ENCODE measurements at regions of chr2 and their contacts with region 1.

Region 1: DNA sequence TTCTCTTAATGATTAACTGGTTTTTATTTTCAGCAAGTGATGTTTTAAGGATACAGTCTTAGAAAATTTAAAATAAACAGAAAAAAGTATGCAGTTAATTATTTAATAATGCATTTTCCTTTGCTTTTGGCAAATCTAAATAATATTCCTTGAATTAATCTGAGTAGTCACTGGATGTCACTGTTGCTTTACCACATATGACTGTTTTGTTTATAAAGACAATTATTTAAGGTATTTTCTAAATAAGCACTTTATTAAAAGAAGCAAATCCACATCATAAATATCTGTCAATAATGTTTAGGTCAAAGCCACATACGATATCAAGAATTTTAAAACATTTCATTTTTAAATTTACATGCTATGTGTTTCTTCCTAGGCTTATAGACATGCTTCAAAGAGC is 40.6 kb upstream of the TFPI start:
- DNase-seq: peak in 1 of 2 donors; percentile 23
- H3K4me3 ChIP-seq: no peak overlapping the region
- H3K27ac ChIP-seq: no peak overlapping the region
- H3K4me1 ChIP-seq: no peaks in the 10 kb centered on the region
- H3K27me3 ChIP-seq: no peaks in the 10 kb centered on the region
- CTCF ChIP-seq: no peak
- EP300 ChIP-seq: no peak
- POLR2A ChIP-seq: no peak

Region 2: DNA sequence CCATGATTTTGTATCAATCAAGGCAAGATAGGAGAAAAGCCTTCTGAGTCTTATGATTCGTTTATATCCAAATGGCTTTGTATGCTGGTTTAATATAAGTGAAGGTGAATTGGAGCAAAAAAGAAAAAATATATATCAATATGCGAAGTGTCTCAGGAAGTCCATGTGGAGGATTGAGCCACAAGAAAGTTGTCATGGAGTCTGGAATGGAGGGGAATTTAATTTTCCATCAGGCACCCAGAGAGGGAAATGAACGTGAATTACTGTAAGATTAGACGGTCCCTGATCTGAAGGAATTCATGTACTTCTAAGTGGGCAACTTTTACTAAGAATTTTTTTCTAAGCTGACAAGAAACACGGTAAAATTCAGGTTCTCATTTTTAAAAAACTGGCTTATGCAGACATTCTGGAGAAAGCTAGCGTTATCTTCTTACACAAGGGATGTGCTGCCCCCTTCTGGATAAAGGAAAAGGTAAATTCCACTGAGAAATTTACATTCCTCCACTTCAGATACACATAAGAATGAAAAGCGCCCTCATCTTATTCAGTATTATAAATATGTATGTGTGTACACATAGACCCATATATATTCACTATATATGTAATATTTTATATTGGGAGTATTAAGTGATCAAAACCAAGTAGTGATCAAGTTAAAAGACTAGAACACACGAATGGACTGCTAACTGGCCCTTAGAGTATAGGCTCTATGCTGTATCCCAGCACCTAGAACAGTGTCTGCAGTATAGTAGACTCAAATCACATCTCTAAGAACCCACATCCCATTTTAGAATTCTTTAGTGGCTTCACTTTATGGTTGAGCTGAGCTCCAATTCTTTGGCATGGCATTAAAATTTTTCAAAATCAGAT is 248.4 kb after region 1 on chr2:
- intact Hi-C with region 1: loop called (anchors 10 kb)
- DNase-seq: peak in 1 of 2 donors; percentile 80
- H3K4me3 ChIP-seq: no peak overlapping the region
- H3K27ac ChIP-seq: no peak overlapping the region
- H3K4me1 ChIP-seq: peaks cover 0 to 6% (median 3%) of the 10 kb centered on the region in 4 donors
- H3K27me3 ChIP-seq: no peaks in the 10 kb centered on the region
- CTCF ChIP-seq: peak in 5 of 7 experiments; percentile 22 to 66 (median 55)
- EP300 ChIP-seq: no peak
- POLR2A ChIP-seq: no peak